MCF 10A (cell line): ENCODE measurements at regions of chr6 and their contacts with region 1.

Region 1: GRCh38 chr6:56637640-56638039 is 5.0 kb downstream of the DST start:
- DNase-seq: peak; percentile 77
- H3K4me3 Mint-ChIP-seq: peak overlapping the region; percentile 88
- H3K27ac Mint-ChIP-seq: peak overlapping the region; percentile 97
- H3K4me1 Mint-ChIP-seq: peaks cover 35% of the 10 kb centered on the region
- H3K27me3 Mint-ChIP-seq: no peaks in the 10 kb centered on the region
- CTCF ChIP-seq: peak; percentile 48

Region 2: DNA sequence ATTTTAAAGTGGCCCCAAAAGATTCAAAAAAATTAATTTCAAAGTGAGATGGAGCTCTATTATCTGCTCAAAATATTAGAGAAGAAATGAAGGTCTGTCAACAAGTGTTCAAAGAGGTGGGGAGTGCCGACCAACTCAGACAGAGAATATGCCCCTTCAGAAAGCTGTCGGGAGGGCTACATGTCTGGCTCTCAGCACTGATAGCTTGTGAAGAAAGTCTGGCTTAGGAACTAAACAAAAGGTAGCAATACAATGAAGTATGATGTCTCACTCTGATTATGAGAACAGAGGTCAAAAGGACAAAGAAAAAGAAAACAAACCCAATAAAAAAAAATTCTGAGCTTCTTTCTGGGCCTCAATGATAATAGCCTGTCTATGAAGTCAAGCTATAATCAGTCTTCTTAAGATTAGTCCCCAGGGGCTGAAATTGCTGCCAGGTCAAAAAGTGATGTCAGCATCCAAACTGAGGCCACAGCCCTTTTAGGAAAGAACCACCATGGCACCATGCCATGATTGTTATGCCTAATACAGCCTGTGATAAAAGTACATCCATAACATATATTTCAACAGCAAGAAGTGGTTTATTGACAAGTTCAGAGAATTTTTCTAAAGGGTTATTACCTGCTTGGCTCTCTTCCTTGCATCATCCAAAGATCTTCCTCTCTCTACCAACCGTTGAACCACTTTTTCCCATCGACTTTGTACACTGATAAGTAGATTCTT is 145.9 kb before region 1 on chr6:
- CTCF ChIA-PET with region 1: no interaction called
- POLR2A ChIA-PET with region 1: no interaction called
- intact Hi-C with region 1: no loop called
- DNase-seq: peak; percentile 56
- H3K4me3 Mint-ChIP-seq: no peak overlapping the region
- H3K27ac Mint-ChIP-seq: peak overlapping the region; percentile 63
- H3K4me1 Mint-ChIP-seq: no peaks in the 10 kb centered on the region
- H3K27me3 Mint-ChIP-seq: no peaks in the 10 kb centered on the region
- CTCF ChIP-seq: no peak

Region 3: DNA sequence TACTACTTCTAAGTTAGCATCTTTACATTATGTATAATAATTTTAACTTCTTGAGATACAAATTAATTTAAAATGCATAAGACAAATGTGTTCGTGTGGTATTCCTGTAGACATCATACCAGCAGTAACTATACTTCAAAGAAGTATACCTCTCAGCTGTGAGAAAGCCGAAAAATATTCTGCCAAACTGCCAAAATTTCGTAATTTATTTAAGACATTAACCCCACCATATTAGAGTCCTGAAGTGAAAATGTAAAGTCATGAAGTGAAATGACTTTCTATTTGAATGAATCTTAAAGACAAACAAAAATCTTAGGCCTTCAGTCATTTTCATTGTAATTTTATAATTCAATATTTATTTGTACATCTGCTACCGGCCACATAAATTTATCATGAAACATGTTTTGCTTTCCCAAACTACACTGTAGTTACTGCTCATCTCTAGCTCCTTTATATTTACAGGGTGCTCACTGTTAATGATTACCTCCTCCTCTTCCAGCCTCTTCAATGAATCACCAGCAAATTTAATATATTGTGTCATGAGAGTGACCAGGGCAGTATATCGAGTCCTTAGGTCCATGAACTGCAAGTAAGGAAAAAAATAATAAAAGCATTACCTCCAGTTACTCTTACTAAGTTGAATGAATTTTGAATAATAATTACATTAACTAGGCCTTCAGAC is 13.5 kb before region 1 on chr6:
- CTCF ChIA-PET with region 1: interaction called, 4 read pairs
- POLR2A ChIA-PET with region 1: interaction called, 1,548 read pairs
- intact Hi-C with region 1: no loop called
- DNase-seq: no peak
- H3K4me3 Mint-ChIP-seq: no peak overlapping the region
- H3K27ac Mint-ChIP-seq: no peak overlapping the region
- H3K4me1 Mint-ChIP-seq: peaks cover 6% of the 10 kb centered on the region
- H3K27me3 Mint-ChIP-seq: no peaks in the 10 kb centered on the region
- CTCF ChIP-seq: no peak

Region 4: GRCh38 chr6:56671651-56672461 is 34.2 kb after region 1 on chr6:
- CTCF ChIA-PET with region 1: interaction called, 11 read pairs
- POLR2A ChIA-PET with region 1: interaction called, 1,548 read pairs
- intact Hi-C with region 1: loop called (anchors 1 kb)
- DNase-seq: no peak
- H3K4me3 Mint-ChIP-seq: no peak overlapping the region
- H3K27ac Mint-ChIP-seq: peak overlapping the region; percentile 73
- H3K4me1 Mint-ChIP-seq: peaks cover 17% of the 10 kb centered on the region
- H3K27me3 Mint-ChIP-seq: no peaks in the 10 kb centered on the region
- CTCF ChIP-seq: no peak

Region 5: GRCh38 chr6:56693246-56693607 is 55.6 kb after region 1 on chr6:
- CTCF ChIA-PET with region 1: interaction called, 11 read pairs
- POLR2A ChIA-PET with region 1: interaction called, 219 read pairs
- intact Hi-C with region 1: no loop called
- DNase-seq: peak; percentile 91
- H3K4me3 Mint-ChIP-seq: peak overlapping the region; percentile 77
- H3K27ac Mint-ChIP-seq: peak overlapping the region; percentile 97
- H3K4me1 Mint-ChIP-seq: peaks cover 51% of the 10 kb centered on the region
- H3K27me3 Mint-ChIP-seq: no peaks in the 10 kb centered on the region
- CTCF ChIP-seq: no peak

Region 6: GRCh38 chr6:56749632-56750151 is 112.1 kb after region 1 on chr6:
- CTCF ChIA-PET with region 1: interaction called, 3 read pairs
- POLR2A ChIA-PET with region 1: interaction called, 17 read pairs
- intact Hi-C with region 1: no loop called
- DNase-seq: peak; percentile 88
- H3K4me3 Mint-ChIP-seq: peak overlapping the region; percentile 65
- H3K27ac Mint-ChIP-seq: peak overlapping the region; percentile 91
- H3K4me1 Mint-ChIP-seq: peaks cover 51% of the 10 kb centered on the region
- H3K27me3 Mint-ChIP-seq: no peaks in the 10 kb centered on the region
- CTCF ChIP-seq: no peak

Region 7: GRCh38 chr6:56843573-56844349 is 206.1 kb after region 1 on chr6:
- CTCF ChIA-PET with region 1: no interaction called
- POLR2A ChIA-PET with region 1: interaction called, 10 read pairs
- intact Hi-C with region 1: loop called (anchors 5 kb)
- DNase-seq: peak; percentile 65
- H3K4me3 Mint-ChIP-seq: peak overlapping the region; percentile 92
- H3K27ac Mint-ChIP-seq: peak overlapping the region; percentile 88
- H3K4me1 Mint-ChIP-seq: peaks cover 16% of the 10 kb centered on the region
- H3K27me3 Mint-ChIP-seq: no peaks in the 10 kb centered on the region
- CTCF ChIP-seq: peak; percentile 33

Region 8: DNA sequence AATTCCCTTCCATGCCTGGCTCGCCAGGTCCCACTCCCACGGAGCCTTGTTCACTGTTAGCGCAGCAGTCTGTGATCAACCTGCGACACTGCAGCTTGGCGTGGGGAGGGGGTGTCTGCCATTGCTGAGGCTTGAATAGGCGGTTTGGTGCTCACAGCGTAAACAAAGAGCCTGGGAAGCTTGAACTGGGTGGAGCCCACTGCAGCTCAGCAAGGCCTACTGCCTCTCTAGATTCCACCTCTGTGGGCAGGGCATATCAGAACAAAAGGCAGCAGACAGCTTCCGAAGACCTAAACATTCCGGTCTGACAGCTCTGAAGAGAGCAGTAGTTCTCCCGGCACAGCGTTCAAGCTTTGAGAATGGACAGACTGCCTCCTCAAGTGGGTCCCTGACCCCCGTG is 650.5 kb after region 1 on chr6:
- CTCF ChIA-PET with region 1: no interaction called
- POLR2A ChIA-PET with region 1: no interaction called
- intact Hi-C with region 1: no loop called
- DNase-seq: no peak
- H3K4me3 Mint-ChIP-seq: no peak overlapping the region
- H3K27ac Mint-ChIP-seq: no peak overlapping the region
- H3K4me1 Mint-ChIP-seq: no peaks in the 10 kb centered on the region
- H3K27me3 Mint-ChIP-seq: no peaks in the 10 kb centered on the region
- CTCF ChIP-seq: no peak